Activated CD4-positive, alpha-beta T cell treated with anti-CD3 and anti-CD28 coated beads, Interleukin-2, amount 10 ng/mL, durations not matched to agents 24 days and 14 days (primary cell): ENCODE measurements at regions of chr12 and their contacts with region 1.

Region 1: GRCh38 chr12:65169320-65170208 is at the start of gene LEMD3:
- DNase-seq: peak; percentile 98
- H3K4me3 Mint-ChIP-seq: peak within 1 kb of the TSS; percentile 91
- H3K27ac Mint-ChIP-seq: peak within 1 kb of the TSS; percentile 99
- H3K4me1 Mint-ChIP-seq: peaks cover 28% of the 10 kb centered on the region
- H3K27me3 Mint-ChIP-seq: peaks cover 2% of the 10 kb centered on the region
- total RNA-seq, gene LEMD3: 28.9 and 30.0 TPM in 2 replicates

Region 2: GRCh38 chr12:65156366-65156841 is 13.2 kb before region 1 on chr12:
- intact Hi-C with region 1: loop called (anchors 1 kb)
- DNase-seq: peak; percentile 71
- H3K4me3 Mint-ChIP-seq: peak overlapping the region; percentile 49
- H3K27ac Mint-ChIP-seq: peak overlapping the region; percentile 78
- H3K4me1 Mint-ChIP-seq: peaks cover 14% of the 10 kb centered on the region
- H3K27me3 Mint-ChIP-seq: peaks cover 15% of the 10 kb centered on the region

Region 3: DNA sequence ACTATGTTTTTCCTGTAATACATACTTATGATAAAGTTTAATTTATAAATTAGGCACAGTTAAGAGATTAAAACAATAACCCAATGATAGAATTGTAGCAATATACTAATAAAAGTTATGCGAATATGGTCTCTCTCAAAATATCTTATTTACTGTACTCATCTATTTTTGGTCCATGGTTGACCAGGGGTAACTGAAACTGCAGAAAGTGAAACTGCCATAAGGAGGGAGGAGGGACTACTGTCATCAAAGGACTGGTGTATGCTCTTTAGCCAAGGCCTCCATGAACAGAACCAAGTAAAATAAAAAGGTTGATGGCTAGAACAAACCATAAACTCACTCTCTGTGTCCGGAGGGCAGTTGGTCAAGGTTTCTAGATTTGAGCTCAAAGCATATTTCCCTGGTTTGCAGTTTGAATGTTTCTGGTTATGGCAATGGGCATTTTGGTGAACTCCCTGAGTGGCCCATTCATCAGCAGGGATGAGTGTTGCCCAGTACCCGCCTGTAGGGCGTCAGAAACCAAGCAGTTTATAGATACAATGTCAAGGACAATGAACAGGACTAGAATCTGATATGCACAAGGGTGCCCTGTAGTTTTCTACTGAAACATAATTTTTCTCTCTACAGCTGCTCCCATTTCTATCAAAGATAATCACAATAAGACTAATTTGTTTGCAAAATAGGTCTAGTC is 19.6 kb after region 1 on chr12:
- intact Hi-C with region 1: loop called (anchors 2 kb)
- DNase-seq: no peak
- H3K4me3 Mint-ChIP-seq: no peak overlapping the region
- H3K27ac Mint-ChIP-seq: no peak overlapping the region
- H3K4me1 Mint-ChIP-seq: peaks cover 38% of the 10 kb centered on the region
- H3K27me3 Mint-ChIP-seq: no peaks in the 10 kb centered on the region

Region 4: GRCh38 chr12:65209655-65210043 is 40.1 kb after region 1 on chr12:
- intact Hi-C with region 1: loop called (anchors 2 kb)
- DNase-seq: no peak
- H3K4me3 Mint-ChIP-seq: peak overlapping the region; percentile 80
- H3K27ac Mint-ChIP-seq: peak overlapping the region; percentile 92
- H3K4me1 Mint-ChIP-seq: peaks cover 42% of the 10 kb centered on the region
- H3K27me3 Mint-ChIP-seq: no peaks in the 10 kb centered on the region

Region 5: GRCh38 chr12:65232476-65233077 is 63.0 kb after region 1 on chr12:
- intact Hi-C with region 1: loop called (anchors 1 kb)
- DNase-seq: no peak
- H3K4me3 Mint-ChIP-seq: no peak overlapping the region
- H3K27ac Mint-ChIP-seq: no peak overlapping the region
- H3K4me1 Mint-ChIP-seq: peaks cover 12% of the 10 kb centered on the region
- H3K27me3 Mint-ChIP-seq: no peaks in the 10 kb centered on the region

Region 6: GRCh38 chr12:66301944-66302826 is 1132.6 kb after region 1 on chr12 and contains the start of gene HELB:
- intact Hi-C with region 1: loop called (anchors 5 kb)
- DNase-seq: peak; percentile 98
- H3K4me3 Mint-ChIP-seq: peak within 1 kb of the TSS; percentile 99
- H3K27ac Mint-ChIP-seq: peak within 1 kb of the TSS; percentile 100
- H3K4me1 Mint-ChIP-seq: peaks cover 45% of the 10 kb centered on the region
- H3K27me3 Mint-ChIP-seq: no peaks in the 10 kb centered on the region
- total RNA-seq, gene HELB: 20.2 and 21.4 TPM in 2 replicates